Right ventricle myocardium superior (tissue), 1 donor: ENCODE measurements at regions of chr15 and their contacts with region 1.

Region 1: DNA sequence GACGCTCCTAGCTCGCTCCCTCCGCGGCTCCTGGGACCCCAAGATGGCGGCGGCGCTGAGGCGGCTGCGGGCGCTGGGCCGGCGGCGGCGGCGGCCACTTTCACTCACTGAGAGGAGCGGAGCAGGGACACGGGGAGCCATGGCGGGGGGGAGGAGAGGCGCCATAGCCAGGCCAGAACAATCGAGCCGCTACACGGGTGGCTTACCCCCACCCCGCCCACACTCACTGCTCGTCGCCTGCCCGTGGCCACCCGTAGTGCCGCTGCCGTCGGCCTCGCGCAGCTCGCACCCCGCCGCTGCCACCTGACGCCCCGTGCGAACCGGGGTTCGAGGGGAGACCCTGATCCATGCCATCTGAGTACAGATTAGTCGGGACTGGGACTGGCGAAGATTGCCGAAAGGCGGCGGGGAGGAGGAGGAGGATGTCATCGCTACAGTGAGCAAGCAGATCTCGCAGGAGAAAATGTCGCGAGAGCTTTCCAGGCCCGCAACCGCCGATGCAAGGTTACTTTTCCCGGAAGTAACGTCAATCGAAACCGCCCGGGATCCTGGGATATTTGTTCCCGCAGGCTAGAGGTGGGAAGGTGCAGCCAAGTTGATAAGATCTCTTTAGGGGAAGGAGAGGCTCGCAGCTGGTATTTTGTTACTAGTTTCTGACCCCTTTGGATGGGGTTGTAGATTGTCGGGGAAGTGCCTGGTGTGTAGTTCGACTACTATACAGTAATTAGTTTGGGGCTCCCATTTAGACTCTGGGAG is at the start of gene INO80:
- DNase-seq: peak; percentile 98
- ATAC-seq: peak; percentile 97
- total RNA-seq, gene INO80: 9.4 TPM

Region 2: DNA sequence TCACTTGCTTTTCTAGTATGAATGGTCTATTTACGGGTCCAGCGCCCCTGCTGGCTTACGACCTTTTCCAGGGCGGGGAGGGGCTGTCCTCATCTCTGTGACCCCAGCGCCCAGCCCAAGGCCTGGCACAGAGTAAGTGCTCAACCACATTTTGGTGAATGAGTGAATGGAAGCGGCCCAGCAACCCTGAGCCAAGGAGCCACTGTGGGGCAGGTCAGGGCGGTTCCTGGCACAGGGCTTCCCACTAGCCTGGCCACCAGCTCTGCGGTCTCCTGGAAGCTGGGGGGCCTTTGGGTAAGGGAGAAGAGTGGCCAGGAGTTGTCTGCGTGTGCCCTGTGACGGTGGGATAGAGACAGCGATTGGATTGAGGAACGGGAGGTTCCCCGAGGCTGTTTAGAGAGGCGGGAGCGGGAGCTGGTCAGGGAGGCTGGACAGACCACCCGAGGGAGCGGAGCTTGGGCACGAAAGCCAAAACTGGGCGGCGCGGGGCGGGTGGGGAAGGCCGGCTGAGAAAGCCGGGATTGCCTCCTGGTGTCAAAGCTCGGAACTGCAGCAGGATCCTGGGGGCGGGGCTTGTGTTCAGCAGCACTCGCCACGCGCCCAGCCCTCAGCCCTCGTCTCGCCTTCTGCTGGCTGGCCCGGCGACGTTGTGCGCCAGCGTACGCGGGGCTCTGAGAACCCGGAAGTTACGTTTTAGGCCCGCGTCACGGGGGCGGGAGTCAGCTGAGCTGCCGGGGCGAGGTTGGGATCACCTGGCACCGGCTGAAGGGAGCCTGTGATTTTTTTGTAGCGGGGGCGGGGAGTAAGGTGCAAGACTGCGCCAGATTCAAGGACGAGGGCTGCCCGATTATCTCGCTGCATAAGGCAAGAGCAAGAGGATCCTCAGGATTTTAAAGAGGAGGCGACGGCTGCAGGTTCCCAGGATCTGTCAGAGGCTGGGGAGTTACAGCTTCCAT is 222.3 kb before region 1 on chr15 and contains the start of gene VPS18:
- intact Hi-C with region 1: loop called (anchors 10 kb)
- DNase-seq: peak; percentile 99
- ATAC-seq: peak; percentile 98
- total RNA-seq, gene VPS18: 18.4 TPM

Region 3: DNA sequence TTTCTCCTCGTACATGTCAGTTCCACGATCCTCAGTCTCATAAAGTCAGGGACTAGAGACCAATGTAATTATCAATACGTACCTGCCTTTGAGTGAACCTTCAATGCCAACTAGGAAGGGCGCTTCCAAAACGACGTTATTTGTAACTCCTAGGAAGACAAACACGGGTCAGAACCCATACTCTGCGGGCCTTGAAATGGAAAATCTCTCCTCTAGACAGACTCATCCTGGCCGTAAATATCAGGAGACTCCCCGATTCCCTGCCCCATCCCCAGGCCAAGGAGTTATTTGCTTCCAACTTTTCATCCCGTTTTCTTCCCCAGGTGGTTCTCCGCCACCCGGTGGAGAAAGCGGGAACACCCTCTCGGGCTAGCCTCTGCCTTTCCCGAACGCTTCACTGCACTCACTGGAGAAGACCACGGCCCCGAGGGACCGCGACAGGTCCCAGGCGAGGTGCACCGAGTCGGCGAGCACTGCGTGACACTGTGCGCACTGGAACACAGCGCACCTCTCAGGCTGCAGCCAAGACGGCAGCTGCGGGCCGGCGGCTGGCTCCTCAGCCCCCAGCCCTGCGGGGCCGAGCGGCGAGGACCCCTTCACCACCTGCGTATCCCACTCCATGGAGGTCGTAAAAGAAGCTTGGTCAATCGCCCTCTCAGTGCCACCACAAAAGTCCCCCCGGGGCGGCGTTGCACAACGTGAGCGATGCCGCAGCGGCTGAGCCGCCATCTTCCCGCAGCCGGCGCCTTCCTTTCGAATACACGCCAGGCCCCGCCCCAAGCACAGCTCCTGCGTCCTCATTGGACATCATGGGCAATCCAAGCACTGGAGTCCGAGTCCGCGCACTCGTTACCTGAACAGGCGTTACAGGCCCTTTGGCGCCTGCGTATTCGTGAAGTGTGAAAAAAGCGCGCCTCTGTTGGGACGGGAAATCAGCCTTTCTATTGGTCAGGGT is 215.8 kb after region 1 on chr15 and contains the start of gene OIP5:
- intact Hi-C with region 1: loop called (anchors 10 kb)
- DNase-seq: peak; percentile 99
- ATAC-seq: peak; percentile 99
- total RNA-seq, gene OIP5: not detected